Prostate gland (tissue), 2 donors: ENCODE measurements at regions of chr15 and their contacts with region 1.

Region 1: DNA sequence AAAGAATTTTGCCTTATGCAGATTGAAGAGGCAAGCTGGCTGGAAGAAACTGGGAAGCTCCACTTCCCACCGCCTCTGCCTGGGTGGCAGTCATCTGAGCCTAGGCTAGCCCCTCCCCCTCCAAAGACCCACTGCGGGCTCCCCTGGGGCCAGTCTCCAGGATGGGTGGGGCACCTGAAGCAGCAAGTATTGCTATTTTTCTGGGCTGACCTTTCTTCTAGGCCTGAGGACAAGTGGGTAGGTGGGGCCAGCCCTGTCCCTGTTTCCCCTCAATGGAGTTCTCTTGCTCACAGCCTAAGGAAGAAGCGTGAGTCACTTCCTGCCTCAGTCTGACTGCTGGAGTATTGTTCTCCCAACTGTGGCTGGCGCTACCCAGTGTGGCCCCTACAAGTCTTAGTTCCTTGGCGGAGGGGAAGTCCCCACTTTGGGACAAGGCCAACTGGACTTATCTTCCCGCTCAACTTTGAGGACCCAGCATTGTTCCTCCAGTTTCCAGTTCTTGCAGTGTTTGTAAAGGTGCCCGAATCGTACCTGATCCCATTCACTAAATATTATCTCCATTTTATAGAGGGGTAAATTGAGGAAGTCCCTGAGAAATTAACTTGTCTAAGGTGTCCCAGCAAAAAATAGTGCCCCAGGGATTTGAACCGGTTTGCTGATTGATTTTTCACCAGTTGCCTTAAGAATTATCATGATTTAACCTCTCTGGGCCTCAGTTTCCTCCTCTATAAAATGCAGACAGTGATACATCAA is 1.4 kb downstream of the FURIN start:
- DNase-seq: no peak
- H3K4me3 ChIP-seq: no peak overlapping the region
- H3K27ac ChIP-seq: peak overlapping the region; percentile 93 to 94
- H3K4me1 ChIP-seq: peaks cover 20% of the 10 kb centered on the region
- H3K27me3 ChIP-seq: no peaks in the 10 kb centered on the region
- CTCF ChIP-seq: no peak
- POLR2A ChIP-seq: no peak

Region 2: DNA sequence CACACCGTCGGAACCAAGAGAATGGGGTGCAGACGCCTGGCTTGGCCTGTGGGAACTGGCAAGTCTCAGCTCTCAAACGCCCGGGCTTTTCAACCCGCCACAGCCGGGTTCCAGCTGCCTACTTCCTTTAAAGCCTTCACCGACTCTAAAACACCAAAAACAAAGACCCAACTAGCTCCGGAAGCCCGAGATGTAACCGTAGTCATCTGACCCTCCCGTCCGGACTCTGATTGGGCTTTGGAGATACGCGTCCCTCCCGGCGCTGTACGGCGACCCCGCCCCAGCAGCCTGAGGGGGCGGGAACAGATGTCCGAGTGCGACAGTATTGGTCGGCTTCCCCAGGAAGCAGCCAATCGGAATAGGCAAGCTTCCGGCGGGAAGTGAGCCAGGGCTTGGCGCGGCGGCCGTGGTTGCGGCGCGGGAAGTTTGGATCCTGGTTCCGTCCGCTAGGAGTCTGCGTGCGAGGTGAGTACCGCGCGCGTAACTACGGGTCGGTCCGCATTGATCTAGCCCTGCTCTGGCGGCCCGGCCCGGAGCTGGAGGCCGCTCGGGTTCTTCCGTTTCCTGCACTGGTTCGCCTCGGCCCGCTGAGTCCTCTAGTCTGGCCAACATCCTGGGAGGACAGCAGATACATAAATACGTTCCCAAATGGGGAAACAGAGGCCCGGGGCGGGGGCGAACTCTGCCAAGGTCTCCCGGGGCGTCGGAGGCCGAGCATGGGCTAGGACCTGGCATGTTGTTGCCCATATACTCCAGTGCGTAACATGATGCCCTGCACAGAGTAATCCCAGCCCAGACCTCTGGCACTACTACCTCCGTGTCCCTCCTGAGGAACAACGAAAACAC is 152.6 kb before region 1 on chr15 and contains the start of gene BLM:
- intact Hi-C with region 1: loop called (anchors 5 kb)
- DNase-seq: peak; percentile 96
- H3K4me3 ChIP-seq: peak within 1 kb of the TSS; percentile 49 to 57
- H3K27ac ChIP-seq: peak within 1 kb of the TSS; percentile 82 to 90
- H3K4me1 ChIP-seq: no peaks in the 10 kb centered on the region
- H3K27me3 ChIP-seq: no peaks in the 10 kb centered on the region
- CTCF ChIP-seq: peak in 3 of 4 experiments; percentile 13 to 62 (median 55)
- POLR2A ChIP-seq: peak; percentile 47
- total RNA-seq, gene BLM: 1.4 to 4.9 TPM

Region 3: GRCh38 chr15:90924375-90924774 is 54.6 kb after region 1 on chr15:
- intact Hi-C with region 1: no loop called
- DNase-seq: no peak
- H3K4me3 ChIP-seq: no peak overlapping the region
- H3K27ac ChIP-seq: no peak overlapping the region
- H3K4me1 ChIP-seq: no peaks in the 10 kb centered on the region
- H3K27me3 ChIP-seq: no peaks in the 10 kb centered on the region
- CTCF ChIP-seq: no peak
- POLR2A ChIP-seq: no peak

Region 4: DNA sequence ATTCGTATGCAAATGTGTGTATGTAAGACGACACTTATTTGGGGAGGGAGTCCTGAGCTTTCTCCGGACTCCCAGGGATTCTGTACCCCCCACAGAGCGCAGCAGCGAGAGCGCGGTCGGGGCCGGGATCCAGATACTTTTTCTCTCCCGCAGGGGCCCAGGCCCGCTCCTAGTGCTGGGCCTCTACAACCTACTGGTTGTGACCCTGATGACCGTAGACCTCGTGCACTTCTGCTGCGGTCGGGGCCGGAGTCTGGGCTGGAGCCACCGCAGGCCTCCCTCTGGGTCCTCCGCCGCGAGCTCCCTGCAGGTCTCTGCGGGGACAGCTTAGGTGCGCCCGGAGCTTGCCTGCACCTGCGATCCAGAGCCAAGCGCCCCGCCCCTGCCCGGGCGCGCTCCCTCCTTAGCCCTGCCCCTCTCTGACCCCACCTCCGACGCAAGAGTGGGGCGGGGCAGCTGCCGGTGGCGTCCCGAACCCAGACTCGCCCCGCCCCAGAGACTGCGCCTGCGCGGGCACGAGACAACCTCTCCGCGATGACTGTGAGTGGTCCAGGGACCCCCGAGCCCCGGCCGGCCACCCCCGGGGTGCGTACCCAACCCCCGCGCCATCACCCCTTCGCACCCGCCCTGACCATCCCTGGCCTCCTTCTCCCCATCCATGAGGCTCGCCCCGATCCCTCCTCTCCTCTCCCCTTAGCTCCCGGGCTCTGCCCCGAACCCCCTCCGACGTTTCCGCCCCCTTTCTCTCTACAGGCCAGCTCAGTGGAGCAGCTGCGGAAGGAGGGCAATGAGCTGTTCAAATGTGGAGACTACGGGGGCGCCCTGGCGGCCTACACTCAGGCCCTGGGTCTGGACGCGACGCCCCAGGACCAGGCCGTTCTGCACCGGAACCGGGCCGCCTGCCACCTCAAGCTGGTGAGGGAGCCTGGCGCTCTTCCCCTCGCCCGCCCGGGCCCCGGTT is 65.3 kb after region 1 on chr15 and contains the start of gene UNC45A:
- intact Hi-C with region 1: no loop called
- DNase-seq: peak; percentile 96
- H3K4me3 ChIP-seq: peak within 1 kb of the TSS; percentile 63 to 71
- H3K27ac ChIP-seq: peak within 1 kb of the TSS; percentile 83 to 88
- H3K4me1 ChIP-seq: peaks cover 9% of the 10 kb centered on the region
- H3K27me3 ChIP-seq: no peaks in the 10 kb centered on the region
- CTCF ChIP-seq: peak in 1 of 4 experiments; percentile 10
- POLR2A ChIP-seq: peak; percentile 93
- total RNA-seq, gene UNC45A: 52.2 to 70.1 TPM